ENCODE measurements at regions of chr7 and their contacts with region 1.

Region 1: DNA sequence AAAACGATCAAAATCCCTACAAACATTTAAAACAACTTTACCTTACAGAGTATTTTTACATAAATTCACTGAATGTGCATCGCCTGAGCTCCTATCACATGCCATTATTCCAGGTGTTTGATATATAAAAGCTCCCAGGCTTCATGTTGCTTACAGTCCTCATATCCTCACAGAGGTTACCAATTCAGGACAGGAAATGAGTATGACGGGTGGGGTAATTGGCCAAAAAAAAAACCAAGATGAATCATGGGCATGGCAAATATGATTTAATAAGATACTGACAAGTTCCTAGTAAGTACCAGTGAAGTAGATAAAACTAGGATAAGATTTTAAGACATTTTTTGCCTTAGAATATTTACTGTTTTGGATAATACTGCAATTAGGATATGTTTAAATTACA is 135.8 kb downstream of the KMT2E start:
- DNase-seq: no peak
- ATAC-seq: no peak
- H3K4me3 ChIP-seq: no peak overlapping the region
- H3K27ac ChIP-seq: no peak overlapping the region
- H3K4me1 ChIP-seq: peaks cover 0 to 25% (median 17%) of the 10 kb centered on the region in 9 donors
- H3K27me3 ChIP-seq: no peaks in the 10 kb centered on the region
- CTCF ChIP-seq: no peak

Region 2: GRCh38 chr7:105325216-105325904 is 175.5 kb after region 1 on chr7:
- intact Hi-C with region 1: loop called in 6 of 10 experiments (anchors 10 kb)
- DNase-seq: no peak
- ATAC-seq: no peak
- H3K4me3 ChIP-seq: no peak overlapping the region
- H3K27ac ChIP-seq: no peak overlapping the region
- H3K4me1 ChIP-seq: peaks cover 0 to 24% (median 0%) of the 10 kb centered on the region in 9 donors
- H3K27me3 ChIP-seq: no peaks in the 10 kb centered on the region
- CTCF ChIP-seq: no peak

Region 3: GRCh38 chr7:105336009-105336408 is 186.2 kb after region 1 on chr7:
- intact Hi-C with region 1: loop called in 5 of 10 experiments (anchors 10 kb)
- DNase-seq: no peak
- ATAC-seq: no peak
- H3K4me3 ChIP-seq: no peak overlapping the region
- H3K27ac ChIP-seq: no peak overlapping the region
- H3K4me1 ChIP-seq: peaks cover 0 to 18% (median 6%) of the 10 kb centered on the region in 9 donors
- H3K27me3 ChIP-seq: no peaks in the 10 kb centered on the region
- CTCF ChIP-seq: peak; percentile 22 to 66 (median 50)

Region 4: GRCh38 chr7:105423987-105424386 is 274.2 kb after region 1 on chr7:
- intact Hi-C with region 1: loop called in 2 of 10 experiments (anchors 5 kb)
- DNase-seq: no peak
- ATAC-seq: no peak
- H3K4me3 ChIP-seq: no peak overlapping the region
- H3K27ac ChIP-seq: no peak overlapping the region
- H3K4me1 ChIP-seq: no peaks in the 10 kb centered on the region
- H3K27me3 ChIP-seq: no peaks in the 10 kb centered on the region
- CTCF ChIP-seq: no peak

Region 5: GRCh38 chr7:105429746-105430612 is 280.2 kb after region 1 on chr7:
- intact Hi-C with region 1: loop called in 2 of 10 experiments (anchors 5 to 10 kb)
- DNase-seq: peak in 1 of 2 donors; percentile 34
- ATAC-seq: peak in 2 of 8 donors; percentile 42 to 46
- H3K4me3 ChIP-seq: no peak overlapping the region
- H3K27ac ChIP-seq: no peak overlapping the region
- H3K4me1 ChIP-seq: peaks cover 0 to 13% (median 0%) of the 10 kb centered on the region in 9 donors
- H3K27me3 ChIP-seq: no peaks in the 10 kb centered on the region
- CTCF ChIP-seq: peak; percentile 15 to 63 (median 50)

Region 6: GRCh38 chr7:105487579-105488571 is 338.0 kb after region 1 on chr7:
- intact Hi-C with region 1: loop called in 1 of 10 experiments (anchors 10 kb)
- DNase-seq: peak in 1 of 2 donors; percentile 17
- ATAC-seq: peak; percentile 73 to 92 (median 82)
- H3K4me3 ChIP-seq: no peak overlapping the region
- H3K27ac ChIP-seq: peak overlapping the region in 6 of 10 donors; percentile 11 to 60 (median 46)
- H3K4me1 ChIP-seq: peaks cover 0 to 16% (median 9%) of the 10 kb centered on the region in 9 donors
- H3K27me3 ChIP-seq: no peaks in the 10 kb centered on the region
- CTCF ChIP-seq: peak in 8 of 9 donors; percentile 16 to 64 (median 49)